MCF 10A (cell line): ENCODE measurements at regions of chr11 and their contacts with region 1.

Region 1: GRCh38 chr11:18395735-18396504 is 1.6 kb downstream of the LDHA start:
- DNase-seq: peak; percentile 99
- H3K4me3 Mint-ChIP-seq: peak overlapping the region; percentile 97
- H3K27ac Mint-ChIP-seq: peak overlapping the region; percentile 97
- H3K4me1 Mint-ChIP-seq: peaks cover 18% of the 10 kb centered on the region
- H3K27me3 Mint-ChIP-seq: no peaks in the 10 kb centered on the region
- CTCF ChIP-seq: no peak

Region 2: GRCh38 chr11:18091731-18092130 is 304.2 kb before region 1 on chr11:
- CTCF ChIA-PET with region 1: no interaction called
- POLR2A ChIA-PET with region 1: no interaction called
- intact Hi-C with region 1: no loop called
- DNase-seq: no peak
- H3K4me3 Mint-ChIP-seq: no peak overlapping the region
- H3K27ac Mint-ChIP-seq: no peak overlapping the region
- H3K4me1 Mint-ChIP-seq: no peaks in the 10 kb centered on the region
- H3K27me3 Mint-ChIP-seq: no peaks in the 10 kb centered on the region
- CTCF ChIP-seq: no peak

Region 3: DNA sequence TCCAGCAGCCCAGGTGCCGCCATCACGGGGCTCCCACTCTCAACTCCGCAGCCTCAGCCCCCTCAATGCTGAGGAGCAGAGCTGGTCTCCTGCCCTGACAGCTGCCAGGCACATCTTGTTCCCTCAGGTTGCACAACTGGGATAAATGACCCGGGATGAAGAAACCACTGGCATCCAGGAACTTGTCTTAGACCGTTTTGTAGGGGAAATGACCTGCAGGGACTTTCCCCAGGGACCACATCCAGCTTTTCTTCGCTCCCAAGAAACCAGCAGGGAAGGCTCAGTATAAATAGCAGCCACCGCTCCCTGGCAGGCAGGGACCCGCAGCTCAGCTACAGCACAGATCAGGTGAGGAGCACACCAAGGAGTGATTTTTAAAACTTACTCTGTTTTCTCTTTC is 130.0 kb before region 1 on chr11 and contains the start of gene SAA1:
- CTCF ChIA-PET with region 1: no interaction called
- POLR2A ChIA-PET with region 1: interaction called, 10 read pairs
- intact Hi-C with region 1: no loop called
- DNase-seq: peak; percentile 92
- H3K4me3 Mint-ChIP-seq: peak within 1 kb of the TSS; percentile 70
- H3K27ac Mint-ChIP-seq: peak within 1 kb of the TSS; percentile 37
- H3K4me1 Mint-ChIP-seq: peaks cover 30% of the 10 kb centered on the region
- H3K27me3 Mint-ChIP-seq: no peaks in the 10 kb centered on the region
- CTCF ChIP-seq: no peak
- total RNA-seq, gene SAA1: 45.5 and 55.7 TPM in 2 replicates

Region 4: DNA sequence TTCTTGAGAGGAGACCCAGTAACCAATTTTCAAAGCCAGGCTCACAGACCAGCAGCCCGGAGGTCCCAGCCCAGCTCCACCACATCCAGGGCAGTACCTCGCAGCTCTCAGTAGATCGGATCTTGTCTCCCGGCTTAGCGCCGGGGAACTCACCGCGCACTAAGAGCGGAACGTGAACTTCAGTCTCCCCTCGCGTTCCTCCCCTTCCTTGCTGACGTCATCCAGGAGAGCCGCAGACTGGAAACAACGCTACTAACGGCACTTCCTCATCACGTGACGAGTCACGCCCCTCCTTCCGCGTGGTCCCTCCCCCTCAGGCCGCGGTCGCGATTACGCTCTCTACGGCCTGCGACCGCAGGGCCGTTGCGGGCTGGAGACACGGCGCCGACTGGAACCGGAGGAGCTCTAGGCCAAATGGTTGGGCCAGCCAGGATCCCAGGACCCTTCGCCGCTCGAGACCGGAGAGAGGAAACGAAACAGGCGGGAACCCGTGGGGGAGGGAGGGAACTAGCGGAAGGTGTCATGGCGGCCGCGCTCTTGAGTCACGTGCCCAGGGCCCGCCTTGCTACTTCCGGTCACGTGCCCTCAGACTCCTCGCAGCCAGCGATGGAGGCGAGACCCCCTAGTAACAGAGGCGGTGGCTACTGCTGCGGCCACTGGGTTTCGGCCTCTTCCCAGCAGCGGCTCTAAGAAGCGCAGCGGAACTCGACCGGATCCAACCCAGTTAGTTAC is 73.8 kb before region 1 on chr11 and contains the starts of genes GTF2H1 and HPS5:
- CTCF ChIA-PET with region 1: interaction called, 3 read pairs
- POLR2A ChIA-PET with region 1: interaction called, 163 read pairs
- intact Hi-C with region 1: loop called (anchors 2 kb)
- DNase-seq: peak; percentile 99
- H3K4me3 Mint-ChIP-seq: peak within 1 kb of the TSS; percentile 92
- H3K27ac Mint-ChIP-seq: peak within 1 kb of the TSS; percentile 100
- H3K4me1 Mint-ChIP-seq: peaks cover 57% of the 10 kb centered on the region
- H3K27me3 Mint-ChIP-seq: no peaks in the 10 kb centered on the region
- CTCF ChIP-seq: no peak
- total RNA-seq, gene GTF2H1: 60.9 and 83.4 TPM in 2 replicates
- total RNA-seq, gene HPS5: 23.6 and 31.8 TPM in 2 replicates

Region 5: DNA sequence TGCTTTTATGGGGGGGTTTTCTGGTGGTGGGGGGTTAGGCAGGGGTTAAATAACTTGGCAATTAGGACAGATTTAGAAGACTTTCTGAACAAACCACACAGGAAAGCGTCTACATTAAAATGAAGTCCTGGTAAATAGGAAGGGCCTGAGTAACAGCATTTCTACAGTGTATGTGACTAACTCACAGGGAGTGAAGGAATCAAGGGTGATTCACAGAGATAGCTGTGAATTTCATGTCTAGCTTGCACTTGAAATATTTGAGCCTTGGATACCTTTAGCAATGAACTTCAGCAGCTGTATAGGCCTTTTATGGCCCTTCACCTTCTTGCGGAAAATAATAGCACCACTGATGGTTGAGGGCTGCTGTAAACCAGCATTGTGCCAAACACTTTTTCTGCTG is 27.7 kb before region 1 on chr11:
- CTCF ChIA-PET with region 1: no interaction called
- POLR2A ChIA-PET with region 1: interaction called, 24 read pairs
- intact Hi-C with region 1: no loop called
- DNase-seq: no peak
- H3K4me3 Mint-ChIP-seq: no peak overlapping the region
- H3K27ac Mint-ChIP-seq: no peak overlapping the region
- H3K4me1 Mint-ChIP-seq: peaks cover 6% of the 10 kb centered on the region
- H3K27me3 Mint-ChIP-seq: no peaks in the 10 kb centered on the region
- CTCF ChIP-seq: no peak

Region 6: GRCh38 chr11:18383388-18384156 is 12.3 kb before region 1 on chr11:
- CTCF ChIA-PET with region 1: interaction called, 24 read pairs
- POLR2A ChIA-PET with region 1: interaction called, 331 read pairs
- intact Hi-C with region 1: loop called (anchors 1 kb)
- DNase-seq: peak; percentile 100
- H3K4me3 Mint-ChIP-seq: peak overlapping the region; percentile 40
- H3K27ac Mint-ChIP-seq: peak overlapping the region; percentile 96
- H3K4me1 Mint-ChIP-seq: peaks cover 21% of the 10 kb centered on the region
- H3K27me3 Mint-ChIP-seq: no peaks in the 10 kb centered on the region
- CTCF ChIP-seq: no peak

Region 7: GRCh38 chr11:18526521-18527296 is 130.8 kb after region 1 on chr11 and contains the start of gene TSG101:
- CTCF ChIA-PET with region 1: interaction called, 4 read pairs
- POLR2A ChIA-PET with region 1: interaction called, 80 read pairs
- intact Hi-C with region 1: loop called (anchors 5 kb)
- DNase-seq: peak; percentile 92
- H3K4me3 Mint-ChIP-seq: peak within 1 kb of the TSS; percentile 91
- H3K27ac Mint-ChIP-seq: peak within 1 kb of the TSS; percentile 99
- H3K4me1 Mint-ChIP-seq: peaks cover 31% of the 10 kb centered on the region
- H3K27me3 Mint-ChIP-seq: no peaks in the 10 kb centered on the region
- CTCF ChIP-seq: no peak
- total RNA-seq, gene TSG101: 70.8 and 78.4 TPM in 2 replicates